ENCODE measurements at regions of chr17 and their contacts with region 1.

Region 1: GRCh38 chr17:64622931-64623654 is 39.0 kb downstream of the SMURF2 start:
- DNase-seq: no peak
- ATAC-seq: no peak

Region 2: GRCh38 chr17:63490321-63490720 is 1132.8 kb before region 1 on chr17:
- intact Hi-C with region 1: loop called (anchors 5 kb)
- DNase-seq: no peak
- ATAC-seq: no peak

Region 3: DNA sequence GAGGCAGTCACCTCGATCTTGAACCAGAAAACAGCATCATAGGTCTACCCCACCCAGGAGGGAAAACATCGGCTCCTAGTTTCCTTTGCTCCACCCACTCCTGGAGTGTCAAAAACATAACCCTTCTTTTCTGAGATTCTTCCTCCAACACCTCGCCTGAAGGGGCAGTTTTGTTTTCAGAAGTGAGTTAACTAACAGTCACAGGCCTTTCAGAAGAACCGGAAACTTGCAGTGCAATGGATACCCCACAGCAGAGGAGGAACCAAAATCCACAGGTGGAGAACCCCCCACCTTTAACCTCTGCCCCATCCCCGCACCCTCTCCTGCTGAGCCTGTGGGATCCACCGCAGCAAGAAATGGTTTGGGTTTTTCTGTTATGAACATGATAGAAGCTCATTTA is 352.2 kb before region 1 on chr17:
- intact Hi-C with region 1: no loop called
- DNase-seq: no peak
- ATAC-seq: no peak

Region 4: DNA sequence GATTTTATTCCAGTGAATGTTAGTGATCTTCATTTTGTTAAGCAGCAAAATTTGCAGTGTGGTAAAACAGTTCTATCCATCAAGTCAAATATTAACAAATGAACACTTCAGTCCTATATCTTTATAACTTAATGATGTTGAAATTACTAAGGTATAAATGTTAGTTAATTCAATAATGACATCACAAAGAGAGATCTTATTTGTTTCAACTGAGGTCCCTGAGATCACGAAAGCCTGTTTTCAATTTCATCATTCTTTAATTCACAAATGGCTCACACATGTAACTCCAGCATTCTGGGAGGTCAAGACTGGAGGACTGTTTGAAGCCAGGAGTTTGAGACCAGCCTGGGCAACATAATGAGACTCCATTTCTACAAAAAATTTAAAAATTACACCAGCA is 25.1 kb after region 1 on chr17:
- intact Hi-C with region 1: no loop called
- DNase-seq: no peak
- ATAC-seq: no peak

Region 5: GRCh38 chr17:65355246-65355645 is 732.2 kb after region 1 on chr17:
- intact Hi-C with region 1: no loop called
- DNase-seq: no peak
- ATAC-seq: no peak

Measured in sciatic nerve (tissue), 2 donors.